Breast epithelium (tissue), 4 donors: ENCODE measurements at regions of chr2 and their contacts with region 1.

Region 1: DNA sequence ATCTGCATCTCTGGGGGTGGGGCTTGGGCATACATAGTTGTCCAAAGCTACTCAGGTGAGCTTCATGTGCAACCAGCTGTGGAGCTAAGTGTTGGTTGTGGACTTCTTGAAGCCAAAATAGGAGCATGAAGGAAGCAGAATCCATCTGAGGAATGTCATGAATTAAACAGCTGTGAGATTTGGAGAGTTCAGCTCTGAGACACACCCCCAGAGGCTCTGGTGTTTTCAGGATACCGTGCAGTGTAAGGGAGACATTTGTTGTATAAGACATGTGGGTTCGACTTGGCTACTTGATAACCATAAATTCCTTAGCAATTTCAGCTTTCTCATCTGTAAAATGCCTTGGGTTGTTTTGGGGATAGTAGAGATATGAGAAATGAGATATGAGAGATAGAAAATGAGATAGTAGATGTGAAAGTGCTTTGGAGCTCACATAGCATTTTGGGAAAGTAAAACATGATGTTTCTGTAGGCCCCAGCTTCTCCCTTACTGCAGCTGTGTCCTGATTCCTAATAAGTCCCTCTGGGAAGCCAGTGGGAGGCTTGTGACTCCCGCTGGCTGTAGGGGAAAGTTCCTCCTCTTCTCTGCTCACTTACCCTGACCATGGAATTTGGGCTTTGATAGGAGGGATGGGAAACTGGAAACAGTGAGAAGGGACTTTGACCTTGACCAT is 50.0 kb downstream of the DPYSL5 start:
- DNase-seq: no peak
- H3K4me3 ChIP-seq: no peak overlapping the region
- H3K27ac ChIP-seq: no peak overlapping the region
- H3K4me1 ChIP-seq: peaks cover 0 to 3% of the 10 kb centered on the region in 2 donors
- H3K27me3 ChIP-seq: no peaks in the 10 kb centered on the region
- CTCF ChIP-seq: no peak
- POLR2A ChIP-seq: no peak

Region 2: DNA sequence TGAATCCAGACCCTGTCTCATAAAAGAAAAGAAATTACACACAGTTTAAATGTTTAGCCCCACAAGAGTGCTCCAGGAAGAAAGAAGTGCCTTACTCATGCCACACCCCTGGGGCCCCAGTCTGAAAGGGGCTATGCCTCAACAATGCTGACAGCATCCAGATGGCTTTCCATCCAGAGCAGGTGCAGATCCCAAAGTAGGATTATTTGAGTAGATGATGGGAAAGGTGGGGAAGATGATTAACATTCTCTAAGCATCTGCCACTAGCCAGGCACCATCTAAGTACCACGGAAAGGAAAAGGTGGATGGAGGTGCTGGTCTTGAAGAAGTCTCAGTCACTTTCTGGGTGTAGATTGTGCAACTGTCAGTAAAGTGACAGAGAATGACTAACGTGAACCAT is 33.7 kb before region 1 on chr2:
- intact Hi-C with region 1: no loop called
- DNase-seq: no peak
- H3K4me3 ChIP-seq: no peak overlapping the region
- H3K27ac ChIP-seq: no peak overlapping the region
- H3K4me1 ChIP-seq: no peaks in the 10 kb centered on the region
- H3K27me3 ChIP-seq: peaks cover 0 to 21% of the 10 kb centered on the region in 2 donors
- CTCF ChIP-seq: no peak
- POLR2A ChIP-seq: no peak

Region 3: DNA sequence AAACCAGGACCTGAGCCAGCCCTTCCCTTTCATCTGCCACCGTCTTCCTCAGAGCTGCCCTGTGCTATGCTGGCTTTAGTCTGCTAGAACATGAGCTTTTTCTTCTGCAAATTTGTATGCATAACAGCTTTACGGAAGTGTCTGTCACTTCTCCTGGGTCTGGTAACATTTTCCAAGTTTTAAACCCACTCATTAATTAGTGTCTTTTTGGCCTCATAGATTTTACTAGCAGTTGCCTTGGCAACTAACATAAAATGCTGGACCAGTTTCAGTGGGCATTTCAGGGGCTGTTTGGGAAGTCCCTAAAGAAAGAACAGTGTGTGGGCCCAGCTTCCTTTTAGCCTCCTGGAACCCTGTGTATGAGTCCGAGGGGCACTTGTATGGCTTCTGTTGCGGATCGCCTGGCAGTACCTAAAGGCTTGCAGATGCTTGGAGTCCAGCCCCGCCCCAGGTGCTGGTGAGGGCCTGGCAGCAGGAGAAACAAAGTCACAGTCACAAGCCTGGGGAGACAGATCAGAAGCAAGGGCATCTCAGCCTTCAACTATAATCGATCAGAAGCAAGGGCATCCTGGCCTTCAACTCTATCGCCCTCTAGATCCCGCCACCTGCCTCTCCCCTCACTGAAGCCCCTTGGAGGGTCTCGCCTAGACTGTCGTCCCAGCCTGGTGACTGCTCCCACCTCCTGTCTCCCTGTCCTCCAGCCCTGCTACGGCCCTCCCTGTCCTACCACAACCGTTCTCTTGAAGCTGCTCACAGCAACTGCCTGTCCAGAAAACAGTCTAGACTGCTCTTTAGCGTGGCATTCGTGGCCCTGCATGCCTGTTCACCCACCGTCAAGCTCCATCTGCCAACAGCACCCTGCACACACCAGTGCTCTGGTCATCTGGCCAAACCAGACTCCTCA is 35.7 kb after region 1 on chr2:
- intact Hi-C with region 1: loop called (anchors 2 kb)
- DNase-seq: no peak
- H3K4me3 ChIP-seq: no peak overlapping the region
- H3K27ac ChIP-seq: no peak overlapping the region
- H3K4me1 ChIP-seq: no peaks in the 10 kb centered on the region
- H3K27me3 ChIP-seq: peaks cover 0 to 9% of the 10 kb centered on the region in 2 donors
- CTCF ChIP-seq: no peak
- POLR2A ChIP-seq: no peak

Region 4: GRCh38 chr2:27123302-27124231 is 225.6 kb after region 1 on chr2 and contains the start of gene ABHD1:
- intact Hi-C with region 1: no loop called
- DNase-seq: no peak
- H3K4me3 ChIP-seq: peak within 1 kb of the TSS; percentile 57 to 69 (median 67)
- H3K27ac ChIP-seq: peak within 1 kb of the TSS; percentile 6 to 29
- H3K4me1 ChIP-seq: peaks cover 0 to 4% of the 10 kb centered on the region in 2 donors
- H3K27me3 ChIP-seq: peaks cover 0 to 4% of the 10 kb centered on the region in 2 donors
- CTCF ChIP-seq: no peak
- POLR2A ChIP-seq: no peak
- total RNA-seq, gene ABHD1: 0.29 to 0.80 TPM in 2 of 3 donors, not detected in the other

Region 5: DNA sequence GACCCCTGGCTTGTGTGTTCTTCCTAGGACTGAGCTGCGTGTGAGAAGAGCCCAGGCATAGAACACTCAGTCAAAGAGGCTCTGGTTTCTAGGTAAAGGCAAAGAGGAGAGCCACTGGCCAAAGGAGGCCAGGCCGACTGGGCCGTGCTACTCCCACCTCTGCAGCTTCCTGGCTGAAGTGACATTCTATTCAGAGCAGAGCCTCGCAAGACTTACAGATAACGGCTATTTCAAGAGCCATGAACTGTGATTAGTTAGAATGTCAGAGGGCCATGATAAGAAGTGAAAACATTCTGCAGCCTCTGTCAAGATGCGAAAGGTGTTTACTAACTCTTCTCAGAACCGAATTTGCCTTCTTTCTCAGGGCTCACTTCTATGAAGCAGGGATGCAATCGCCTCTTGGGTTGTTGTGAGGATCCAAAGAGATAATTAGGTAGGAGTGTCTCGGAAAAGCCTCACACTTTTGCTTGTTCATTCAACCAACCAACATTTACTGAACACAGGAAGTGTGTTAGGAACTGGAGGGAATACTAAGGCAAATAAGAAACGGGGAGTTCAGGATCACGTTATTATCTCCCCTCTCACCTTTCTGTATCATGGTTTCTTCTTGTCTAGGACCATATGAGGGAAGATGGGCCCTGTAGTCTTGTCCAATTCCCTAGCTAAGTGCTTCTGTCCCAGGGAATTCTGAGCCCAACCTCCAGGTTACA is 373.8 kb after region 1 on chr2:
- intact Hi-C with region 1: no loop called
- DNase-seq: no peak
- H3K4me3 ChIP-seq: no peak overlapping the region
- H3K27ac ChIP-seq: no peak overlapping the region
- H3K4me1 ChIP-seq: no peaks in the 10 kb centered on the region
- H3K27me3 ChIP-seq: peaks cover 0 to 7% of the 10 kb centered on the region in 2 donors
- CTCF ChIP-seq: no peak
- POLR2A ChIP-seq: no peak

Region 6: DNA sequence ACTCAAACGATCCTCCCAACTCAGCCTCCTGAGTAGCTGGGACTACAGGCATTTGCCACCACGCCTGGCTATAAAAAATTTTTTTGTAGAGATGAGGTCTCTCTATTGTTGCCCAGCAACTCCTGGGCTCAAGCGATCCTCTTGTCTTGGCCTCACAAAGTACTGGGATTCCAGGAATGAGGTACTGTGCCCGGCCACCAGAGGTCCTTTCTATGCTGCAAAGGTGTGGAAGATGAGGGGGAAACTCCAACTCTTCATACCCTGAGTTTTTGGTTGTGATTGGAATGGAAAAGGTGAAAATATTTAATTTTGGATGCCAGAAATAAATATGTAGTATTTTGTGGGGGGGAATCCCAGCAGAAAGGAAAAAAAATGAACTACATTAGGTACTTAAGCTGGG is 909.5 kb after region 1 on chr2:
- intact Hi-C with region 1: no loop called
- DNase-seq: no peak
- H3K4me3 ChIP-seq: no peak overlapping the region
- H3K27ac ChIP-seq: no peak overlapping the region
- H3K4me1 ChIP-seq: no peaks in the 10 kb centered on the region
- H3K27me3 ChIP-seq: no peaks in the 10 kb centered on the region
- CTCF ChIP-seq: peak; percentile 25 to 61 (median 54)
- POLR2A ChIP-seq: no peak